ENCODE measurements at regions of chr19 and their contacts with region 1.

Region 1: GRCh38 chr19:55117636-55118391 is at the start of gene PPP1R12C:
- DNase-seq: peak; percentile 99
- H3K4me3 ChIP-seq: peak within 1 kb of the TSS; percentile 88 to 96 (median 92)
- H3K27ac ChIP-seq: peak within 1 kb of the TSS; percentile 58
- H3K4me1 ChIP-seq: peaks cover 18% of the 10 kb centered on the region
- H3K27me3 ChIP-seq: no peaks in the 10 kb centered on the region
- CTCF ChIP-seq: peak in 1 of 2 donors; percentile 7
- total RNA-seq, gene PPP1R12C: 29.8 to 74.8 TPM

Region 2: DNA sequence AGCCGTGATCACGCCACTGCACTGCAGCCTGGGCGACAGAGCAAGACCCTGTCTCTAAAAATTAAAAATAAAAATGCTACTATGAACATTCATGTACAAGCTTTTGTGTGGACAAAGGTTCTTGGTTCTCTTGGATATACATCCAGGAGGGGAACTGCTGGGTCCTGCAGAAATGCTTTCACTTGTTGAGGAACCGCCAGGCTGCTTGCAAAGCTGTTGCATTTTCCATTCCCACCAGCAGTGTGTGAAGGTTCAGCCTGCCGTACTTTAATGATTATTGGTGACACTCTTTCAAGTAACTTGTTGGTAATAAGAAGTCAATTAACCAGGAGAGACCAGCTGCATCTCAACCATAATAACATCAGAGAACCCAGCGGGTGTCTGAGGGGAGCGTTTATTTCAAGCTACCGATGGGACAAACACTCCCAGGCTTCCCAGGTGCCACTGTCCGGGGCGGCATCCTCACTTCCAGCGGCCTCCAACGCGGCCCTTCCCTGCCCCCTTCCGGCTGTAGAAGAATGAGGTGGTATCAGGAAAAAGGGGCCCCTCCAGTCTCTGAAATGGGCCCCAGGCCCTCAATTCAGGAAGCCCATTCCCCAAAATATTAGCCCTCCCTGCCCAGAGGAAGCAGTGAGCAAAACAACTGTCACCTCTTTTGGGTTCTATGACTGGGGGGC is 14.8 kb after region 1 on chr19:
- CTCF ChIA-PET with region 1: no interaction called
- dilution Hi-C with region 1: no loop called
- in situ Hi-C with region 1: no loop called
- intact Hi-C with region 1: no loop called
- DNase-seq: no peak
- H3K4me3 ChIP-seq: no peak overlapping the region
- H3K27ac ChIP-seq: no peak overlapping the region
- H3K4me1 ChIP-seq: no peaks in the 10 kb centered on the region
- H3K27me3 ChIP-seq: no peaks in the 10 kb centered on the region
- CTCF ChIP-seq: no peak

Region 3: DNA sequence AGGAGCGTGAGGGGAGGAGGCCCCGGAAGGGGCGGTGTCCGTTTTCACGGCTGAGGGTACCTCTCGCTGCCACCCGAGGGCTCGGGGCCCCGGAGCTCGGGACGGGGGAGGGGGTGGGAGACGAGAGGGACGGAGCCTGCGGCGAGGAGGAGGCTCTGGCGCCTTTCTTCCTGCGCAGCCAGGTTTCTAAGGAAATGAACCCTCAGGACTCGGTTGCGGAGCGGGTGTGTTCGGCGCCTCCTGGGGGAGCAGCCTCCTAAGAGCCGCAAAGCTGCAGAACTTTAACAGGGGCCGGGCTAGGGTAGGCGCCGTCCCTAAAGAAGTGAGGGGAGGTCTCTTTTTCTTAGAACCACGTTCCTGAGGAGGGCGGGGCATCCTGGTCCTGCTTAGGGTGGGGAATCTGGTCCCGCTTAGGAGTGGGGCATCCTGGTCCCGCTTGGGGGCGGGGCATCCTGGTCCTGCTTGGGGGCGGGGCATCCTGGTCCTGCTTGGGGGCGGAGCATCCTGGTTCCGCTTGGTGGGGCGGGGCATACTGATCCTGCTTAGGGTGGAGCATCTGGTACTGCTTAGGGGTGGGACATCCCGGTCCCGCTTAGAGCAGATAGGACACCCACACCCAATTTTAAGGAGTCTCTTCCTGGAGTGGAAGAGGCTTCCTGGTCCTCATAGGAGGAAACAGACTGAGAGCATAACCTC is 56.0 kb after region 1 on chr19:
- CTCF ChIA-PET with region 1: no interaction called
- dilution Hi-C with region 1: loop called (anchors 5 kb)
- in situ Hi-C with region 1: no loop called
- intact Hi-C with region 1: no loop called
- DNase-seq: peak; percentile 30
- H3K4me3 ChIP-seq: peak overlapping the region; percentile 56 to 69 (median 59)
- H3K27ac ChIP-seq: no peak overlapping the region
- H3K4me1 ChIP-seq: peaks cover 15% of the 10 kb centered on the region
- H3K27me3 ChIP-seq: no peaks in the 10 kb centered on the region
- CTCF ChIP-seq: peak in 1 of 2 donors; percentile 33

Region 4: GRCh38 chr19:55232296-55232622 is 114.4 kb after region 1 on chr19:
- CTCF ChIA-PET with region 1: no interaction called
- dilution Hi-C with region 1: loop called (anchors 5 kb)
- in situ Hi-C with region 1: no loop called
- intact Hi-C with region 1: no loop called
- DNase-seq: no peak
- H3K4me3 ChIP-seq: no peak overlapping the region
- H3K27ac ChIP-seq: no peak overlapping the region
- H3K4me1 ChIP-seq: no peaks in the 10 kb centered on the region
- H3K27me3 ChIP-seq: no peaks in the 10 kb centered on the region
- CTCF ChIP-seq: no peak

Region 5: DNA sequence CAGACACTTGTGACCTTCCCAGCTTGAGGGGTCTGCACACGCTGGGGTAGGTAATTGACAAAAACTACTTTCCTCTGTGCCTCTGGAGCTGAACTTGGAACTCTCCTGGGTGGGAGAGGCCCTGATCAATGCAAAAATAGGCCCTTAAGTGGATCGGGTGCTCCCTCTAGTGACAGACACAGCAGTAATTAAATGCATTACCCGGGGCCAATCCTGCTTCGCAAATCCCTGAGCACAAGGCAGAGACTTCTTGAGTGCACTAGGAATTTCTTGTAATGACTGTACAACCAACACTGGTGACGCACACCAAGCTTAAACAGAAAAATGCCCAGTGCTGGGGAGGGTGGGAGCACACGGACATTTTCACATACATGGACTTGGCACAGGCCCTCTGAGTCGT is 300.4 kb after region 1 on chr19:
- CTCF ChIA-PET with region 1: no interaction called
- dilution Hi-C with region 1: loop called (anchors 5 kb)
- in situ Hi-C with region 1: no loop called
- intact Hi-C with region 1: no loop called
- DNase-seq: peak; percentile 69
- H3K4me3 ChIP-seq: no peak overlapping the region
- H3K27ac ChIP-seq: no peak overlapping the region
- H3K4me1 ChIP-seq: no peaks in the 10 kb centered on the region
- H3K27me3 ChIP-seq: peaks cover 3% of the 10 kb centered on the region
- CTCF ChIP-seq: peak; percentile 75 to 77

Region 6: DNA sequence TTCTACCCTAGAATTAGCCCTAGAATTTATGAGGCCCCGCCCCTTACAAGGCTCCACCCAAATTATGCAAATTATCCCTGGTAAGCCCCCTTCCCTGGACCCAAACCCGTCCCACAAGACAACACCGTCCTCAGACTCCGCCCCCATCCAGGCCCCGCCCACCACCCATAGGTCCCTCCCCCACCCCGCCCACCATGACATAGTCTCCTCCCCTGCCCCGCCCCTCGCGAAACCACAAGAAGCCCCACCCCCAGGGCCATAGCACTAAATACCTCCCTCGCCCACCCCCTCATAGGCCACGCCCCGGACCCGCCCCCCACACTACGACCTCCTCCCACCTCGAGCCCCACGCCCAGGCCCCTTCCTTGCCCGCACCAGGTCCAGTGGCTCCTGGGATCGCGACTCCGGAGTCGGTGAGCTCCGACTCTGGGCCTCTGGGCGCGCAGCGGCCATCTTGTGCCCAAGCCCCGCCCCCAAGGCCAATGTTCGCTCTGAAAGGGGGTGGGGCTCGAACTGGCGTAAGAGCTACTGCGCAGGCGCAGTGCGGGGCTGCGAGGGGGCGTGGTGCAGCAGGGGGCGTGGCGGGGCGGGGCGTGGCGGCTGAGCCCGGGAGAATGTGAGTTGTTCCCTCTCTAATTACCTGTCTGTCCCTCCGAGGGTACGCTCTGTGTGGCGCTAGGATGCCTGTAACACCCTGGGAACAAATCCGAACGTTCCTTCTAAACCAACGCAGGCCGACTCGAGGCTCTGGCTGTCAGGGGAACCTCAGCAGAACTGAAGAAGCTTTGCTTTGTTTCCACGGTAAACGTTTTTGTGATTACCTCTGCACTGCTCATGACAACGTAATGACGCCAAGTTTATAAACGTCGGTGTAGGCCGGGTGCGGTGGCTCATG is 506.5 kb after region 1 on chr19 and contains the start of gene ZNF784:
- CTCF ChIA-PET with region 1: no interaction called
- dilution Hi-C with region 1: loop called (anchors 5 kb)
- in situ Hi-C with region 1: no loop called
- intact Hi-C with region 1: no loop called
- DNase-seq: peak; percentile 85
- H3K4me3 ChIP-seq: peak within 1 kb of the TSS; percentile 43 to 76 (median 54)
- H3K27ac ChIP-seq: peak within 1 kb of the TSS; percentile 39
- H3K4me1 ChIP-seq: peaks cover 4% of the 10 kb centered on the region
- H3K27me3 ChIP-seq: no peaks in the 10 kb centered on the region
- CTCF ChIP-seq: no peak
- total RNA-seq, gene ZNF784: 4.2 to 6.1 TPM